Dendritic cell treated with granulocyte-macrophage colony-stimulating factor and Interleukin-4, amounts not matched to agents 40 ng/mL and 50 ng/mL, for 4 days (primary cell): ENCODE measurements at regions of chr9 and their contacts with region 1.

Region 1: DNA sequence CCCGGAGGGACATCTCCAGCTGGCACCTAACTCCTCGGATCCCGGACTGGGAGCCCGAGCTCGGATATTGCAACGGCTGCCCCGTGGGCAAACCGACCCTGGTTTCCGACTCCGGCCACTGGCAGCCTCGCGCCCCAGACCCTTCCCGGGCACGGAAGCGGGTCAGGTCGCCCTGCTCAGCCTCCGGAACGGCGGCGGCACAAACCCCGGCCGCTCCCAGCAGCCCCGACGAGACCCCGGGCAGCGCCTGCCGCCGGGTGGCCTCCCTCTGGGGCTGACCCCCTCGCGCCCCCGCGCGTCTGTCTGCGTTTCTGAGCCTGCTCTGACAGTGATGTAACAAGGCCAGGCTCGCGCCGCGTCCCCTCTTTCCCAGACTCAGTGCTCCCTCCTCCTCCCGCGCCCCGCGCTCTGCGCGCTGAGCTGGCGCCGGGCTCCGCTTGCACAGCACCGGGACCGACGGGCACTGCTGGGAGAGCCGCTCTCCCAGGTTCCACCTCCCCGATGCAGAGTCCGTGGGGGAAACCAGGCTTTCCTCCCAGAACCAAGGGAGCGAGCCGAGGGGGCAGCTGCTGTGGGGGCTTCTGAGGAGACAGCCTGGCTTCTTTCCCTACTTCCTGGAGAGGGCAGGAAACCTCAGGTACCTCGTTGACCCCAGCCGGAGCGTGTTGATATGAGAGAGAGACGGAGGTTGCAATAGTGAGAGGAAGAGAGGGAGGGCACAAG is at the start of gene TMEM215:
- H3K4me3 Mint-ChIP-seq: no peak within 1 kb of the TSS
- H3K27ac Mint-ChIP-seq: no peak within 1 kb of the TSS
- H3K4me1 Mint-ChIP-seq: no peaks in the 10 kb centered on the region
- H3K27me3 Mint-ChIP-seq: peaks cover 55% of the 10 kb centered on the region

Region 2: GRCh38 chr9:32755730-32756129 is 27.6 kb before region 1 on chr9:
- intact Hi-C with region 1: no loop called
- H3K4me3 Mint-ChIP-seq: no peak overlapping the region
- H3K27ac Mint-ChIP-seq: no peak overlapping the region
- H3K4me1 Mint-ChIP-seq: no peaks in the 10 kb centered on the region
- H3K27me3 Mint-ChIP-seq: no peaks in the 10 kb centered on the region

Region 3: DNA sequence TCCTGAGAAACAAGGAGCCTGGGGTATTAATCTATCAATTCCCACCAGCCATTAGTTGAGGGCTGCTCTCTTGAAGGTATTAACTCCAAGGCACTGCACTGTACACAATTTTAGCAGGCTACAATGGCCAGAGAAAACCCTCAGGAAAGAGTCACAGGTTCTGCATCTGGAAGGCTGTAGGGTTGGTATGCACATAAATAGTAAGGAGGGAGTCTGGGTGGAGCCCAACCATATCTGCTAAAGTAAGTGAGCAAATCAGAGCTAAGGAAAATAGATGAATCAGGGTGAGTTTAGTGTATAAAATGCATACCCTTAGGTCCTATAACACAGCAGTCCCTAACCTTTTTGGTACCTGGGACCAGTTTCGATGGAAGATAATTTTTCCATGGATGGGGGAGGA is 18.2 kb after region 1 on chr9:
- intact Hi-C with region 1: no loop called
- H3K4me3 Mint-ChIP-seq: no peak overlapping the region
- H3K27ac Mint-ChIP-seq: no peak overlapping the region
- H3K4me1 Mint-ChIP-seq: no peaks in the 10 kb centered on the region
- H3K27me3 Mint-ChIP-seq: peaks cover 6% of the 10 kb centered on the region

Region 4: GRCh38 chr9:32841314-32841713 is 58.0 kb after region 1 on chr9:
- intact Hi-C with region 1: loop called (anchors 10 kb)
- H3K4me3 Mint-ChIP-seq: no peak overlapping the region
- H3K27ac Mint-ChIP-seq: no peak overlapping the region
- H3K4me1 Mint-ChIP-seq: no peaks in the 10 kb centered on the region
- H3K27me3 Mint-ChIP-seq: peaks cover 28% of the 10 kb centered on the region

Region 5: DNA sequence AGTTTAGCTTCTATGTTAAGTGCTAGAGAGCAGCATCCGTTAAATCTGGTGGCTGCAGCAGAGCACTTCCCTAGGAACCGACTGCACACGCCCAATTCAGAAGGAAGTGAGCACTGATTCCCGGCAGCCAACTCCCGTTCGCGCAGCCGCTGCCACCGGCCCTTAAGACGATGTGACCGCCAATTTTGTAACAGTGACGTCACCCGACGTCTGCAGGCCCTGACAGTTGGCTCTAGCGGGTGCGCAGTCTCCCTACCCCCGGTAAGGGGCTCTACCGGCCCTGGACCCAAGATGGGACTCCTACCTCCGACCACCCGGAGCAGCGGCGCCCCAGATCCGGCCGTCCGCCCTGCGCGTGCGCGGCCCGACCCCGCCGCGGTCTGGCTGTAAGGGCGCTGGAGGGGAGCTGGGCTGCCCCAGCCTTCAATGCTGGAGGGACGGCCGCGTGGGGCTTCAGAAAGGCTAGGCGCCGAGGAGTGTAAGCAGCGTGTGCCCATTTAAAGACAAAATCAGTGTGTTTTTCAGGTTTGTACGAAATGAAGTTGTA is 260.9 kb after region 1 on chr9:
- intact Hi-C with region 1: no loop called
- H3K4me3 Mint-ChIP-seq: peak overlapping the region; percentile 77
- H3K27ac Mint-ChIP-seq: peak overlapping the region; percentile 90
- H3K4me1 Mint-ChIP-seq: peaks cover 34% of the 10 kb centered on the region
- H3K27me3 Mint-ChIP-seq: no peaks in the 10 kb centered on the region